ENCODE measurements at regions of chr2 and their contacts with region 1.

Region 1: DNA sequence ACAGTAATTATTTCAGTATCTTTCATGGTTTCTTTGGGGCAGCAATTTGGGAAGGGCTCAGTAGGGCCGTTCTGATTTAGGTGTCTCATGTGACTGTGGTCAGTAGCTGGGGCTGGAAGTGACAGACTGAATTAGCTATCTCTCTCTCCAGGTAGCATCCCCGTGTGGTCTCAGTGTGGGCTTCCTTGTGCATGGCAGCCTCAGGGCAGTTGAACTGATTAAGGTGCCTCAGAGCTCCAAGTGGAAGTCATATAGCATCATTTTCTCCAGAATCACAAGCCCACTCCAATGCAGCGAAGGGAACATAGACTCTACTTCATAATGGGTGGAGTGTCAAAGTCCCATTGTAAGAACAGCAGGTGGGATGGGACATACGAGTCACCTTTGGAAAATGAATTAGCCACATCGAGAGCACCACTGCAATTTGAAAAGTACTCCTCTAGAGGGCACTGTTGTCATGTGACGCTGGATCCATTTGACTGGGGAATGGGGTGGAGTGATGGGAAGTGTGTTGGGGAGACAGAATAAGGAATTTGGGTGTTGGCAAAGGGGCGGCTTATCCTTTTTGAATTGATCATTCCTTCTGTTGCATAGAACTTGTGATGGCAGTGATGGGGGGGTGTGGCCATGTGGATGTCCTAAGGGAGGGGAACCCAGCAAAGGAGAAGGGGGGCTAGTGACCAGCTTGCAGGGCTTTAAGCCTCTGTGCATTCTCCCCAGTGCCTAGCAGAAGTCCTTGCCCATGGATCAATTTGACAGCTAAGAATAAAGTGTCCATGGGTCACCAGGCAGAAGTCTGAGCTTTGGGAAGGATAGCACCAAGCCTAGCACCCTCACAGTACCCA is 39.3 kb upstream of the FAM136A start:
- DNase-seq: peak; percentile 53
- ATAC-seq: peak; percentile 91
- H3K4me3 Mint-ChIP-seq: no peak overlapping the region
- H3K27ac Mint-ChIP-seq: no peak overlapping the region
- H3K4me1 Mint-ChIP-seq: no peaks in the 10 kb centered on the region
- H3K27me3 Mint-ChIP-seq: peaks cover 64% of the 10 kb centered on the region
- CTCF ChIP-seq: peak; percentile 66

Region 2: DNA sequence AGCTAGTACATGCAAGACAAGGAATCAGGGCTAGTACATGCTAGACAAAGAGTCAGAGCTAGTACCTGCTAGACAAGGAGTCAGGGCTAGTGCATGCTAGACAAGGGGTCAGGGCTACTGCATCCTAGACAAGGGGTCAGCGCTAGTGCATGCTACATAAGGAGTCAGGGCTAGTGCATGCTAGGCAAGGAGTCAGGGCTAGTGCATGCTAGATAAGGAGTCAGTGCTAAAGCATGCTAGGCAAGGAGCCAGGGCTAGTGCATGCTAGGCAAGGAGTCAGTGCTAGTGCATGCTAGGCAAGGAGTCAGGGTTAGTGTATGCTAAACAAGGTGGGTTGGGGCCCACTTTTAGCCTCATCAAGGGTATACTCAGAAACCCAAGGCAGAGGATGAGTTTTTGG is 50.8 kb after region 1 on chr2:
- CTCF ChIA-PET with region 1: no interaction called
- POLR2A ChIA-PET with region 1: no interaction called
- DNase-seq: no peak
- ATAC-seq: no peak
- H3K4me3 Mint-ChIP-seq: no peak overlapping the region
- H3K27ac Mint-ChIP-seq: no peak overlapping the region
- H3K4me1 Mint-ChIP-seq: no peaks in the 10 kb centered on the region
- H3K27me3 Mint-ChIP-seq: peaks cover 94% of the 10 kb centered on the region
- CTCF ChIP-seq: no peak

Region 3: GRCh38 chr2:70412294-70413070 is 71.3 kb after region 1 on chr2:
- CTCF ChIA-PET with region 1: no interaction called
- POLR2A ChIA-PET with region 1: no interaction called
- DNase-seq: no peak
- ATAC-seq: no peak
- H3K4me3 Mint-ChIP-seq: no peak overlapping the region
- H3K27ac Mint-ChIP-seq: no peak overlapping the region
- H3K4me1 Mint-ChIP-seq: no peaks in the 10 kb centered on the region
- H3K27me3 Mint-ChIP-seq: peaks cover 96% of the 10 kb centered on the region
- CTCF ChIP-seq: no peak

Region 4: GRCh38 chr2:70647873-70648481 is 306.8 kb after region 1 on chr2:
- CTCF ChIA-PET with region 1: interaction called, 31 read pairs
- POLR2A ChIA-PET with region 1: no interaction called
- DNase-seq: peak; percentile 90
- ATAC-seq: peak; percentile 76
- H3K4me3 Mint-ChIP-seq: no peak overlapping the region
- H3K27ac Mint-ChIP-seq: no peak overlapping the region
- H3K4me1 Mint-ChIP-seq: no peaks in the 10 kb centered on the region
- H3K27me3 Mint-ChIP-seq: peaks cover 37% of the 10 kb centered on the region
- CTCF ChIP-seq: peak; percentile 88